SK-N-SH (cell line): ENCODE measurements at regions of chr3 and their contacts with region 1.

Region 1: DNA sequence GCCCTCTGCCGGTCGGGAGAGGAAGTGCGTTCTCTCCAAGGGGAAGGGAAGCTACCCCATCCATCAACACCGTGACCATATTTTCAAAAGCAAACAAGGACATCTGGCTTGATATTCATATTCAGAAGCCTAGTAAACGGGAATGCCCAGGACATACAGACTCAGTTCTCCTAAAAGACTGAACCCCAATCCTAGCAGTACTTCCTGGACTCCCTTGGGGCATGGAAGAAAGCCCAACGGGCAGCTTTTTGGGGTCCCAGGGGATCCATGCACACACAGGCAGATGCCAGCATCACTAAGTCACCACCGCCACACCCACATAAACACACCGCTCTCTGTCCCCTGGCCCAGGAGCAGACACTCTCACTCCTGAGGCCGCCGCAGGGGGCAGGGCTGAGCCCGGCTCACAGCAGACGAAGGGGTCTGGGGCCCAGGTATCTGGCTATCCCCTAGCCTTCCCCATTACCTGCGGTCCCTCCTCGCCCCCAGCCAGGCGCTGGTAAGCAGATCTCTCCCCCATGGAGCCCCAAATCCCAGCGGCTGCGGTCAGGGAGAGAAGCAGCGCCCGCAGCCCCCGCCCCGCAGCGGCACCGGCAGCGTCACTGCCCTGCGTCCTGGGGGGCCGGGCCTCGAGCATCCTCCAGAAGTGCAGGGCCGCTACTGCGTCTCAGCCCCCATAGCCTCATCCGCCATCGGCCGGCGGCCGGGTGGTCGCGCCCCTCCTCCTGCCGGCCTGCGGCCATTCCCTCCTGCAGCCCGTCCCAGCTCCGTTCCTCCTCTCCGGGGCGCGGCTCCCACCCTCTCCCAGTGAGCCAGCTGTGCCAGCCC is 13.4 kb downstream of the TNK2 start:
- DNase-seq: peak; percentile 84
- H3K4me3 ChIP-seq: peak overlapping the region; percentile 80 to 99
- H3K27ac ChIP-seq: peak overlapping the region; percentile 81 to 92
- H3K4me1 ChIP-seq: peaks cover 41 to 59% of the 10 kb centered on the region in 2 experiments; a peak in 3 of 4 replicates
- H3K27me3 ChIP-seq: no peaks in the 10 kb centered on the region
- CTCF ChIP-seq: peak; percentile 95
- EP300 ChIP-seq: no peak; a peak in 1 of 4 replicates
- RAD21 ChIP-seq: peak; percentile 88

Region 2: DNA sequence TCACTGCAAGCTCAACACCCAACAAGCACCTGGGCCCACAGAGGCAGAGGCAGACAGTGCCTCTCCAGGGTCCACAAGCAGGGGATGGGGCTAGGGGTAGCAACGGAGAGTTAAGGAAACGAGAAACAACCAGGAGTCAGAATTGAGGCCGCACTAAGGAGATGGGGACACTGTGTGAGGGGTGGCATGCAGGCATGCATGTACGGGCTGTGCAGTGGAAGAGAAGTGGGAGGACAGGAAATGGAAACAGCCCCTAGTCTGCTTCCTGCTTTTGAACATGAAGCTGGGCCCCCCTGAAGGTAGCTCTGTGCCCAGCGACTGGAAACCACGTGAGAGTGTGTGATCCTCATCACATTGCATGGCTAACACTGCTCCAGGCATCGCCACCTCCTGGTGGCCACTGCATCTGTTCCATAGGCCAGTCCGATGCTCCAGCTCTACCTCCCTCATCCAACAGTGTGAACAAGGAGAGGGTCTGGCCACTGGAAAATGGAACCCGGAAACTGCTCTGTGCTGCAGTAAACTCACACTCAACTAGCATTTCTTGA is 668.0 kb before region 1 on chr3:
- CTCF ChIA-PET with region 1: no interaction called
- POLR2A ChIA-PET with region 1: no interaction called
- DNase-seq: no peak
- H3K4me3 ChIP-seq: no peak overlapping the region
- H3K27ac ChIP-seq: no peak overlapping the region
- H3K4me1 ChIP-seq: peaks cover 2 to 8% of the 10 kb centered on the region in 2 experiments; a peak in 3 of 4 replicates
- H3K27me3 ChIP-seq: no peaks in the 10 kb centered on the region
- CTCF ChIP-seq: peak; percentile 38
- EP300 ChIP-seq: no peak
- RAD21 ChIP-seq: peak; percentile 48

Region 3: GRCh38 chr3:195870442-195870841 is 24.6 kb before region 1 on chr3:
- CTCF ChIA-PET with region 1: interaction called, 52 read pairs
- POLR2A ChIA-PET with region 1: no interaction called
- DNase-seq: no peak
- H3K4me3 ChIP-seq: no peak overlapping the region
- H3K27ac ChIP-seq: no peak overlapping the region
- H3K4me1 ChIP-seq: no peaks in the 10 kb centered on the region
- H3K27me3 ChIP-seq: no peaks in the 10 kb centered on the region
- CTCF ChIP-seq: no peak
- EP300 ChIP-seq: no peak
- RAD21 ChIP-seq: no peak

Region 4: GRCh38 chr3:195876297-195877031 is 18.5 kb before region 1 on chr3:
- CTCF ChIA-PET with region 1: interaction called, 52 read pairs
- POLR2A ChIA-PET with region 1: no interaction called
- DNase-seq: no peak
- H3K4me3 ChIP-seq: no peak overlapping the region
- H3K27ac ChIP-seq: no peak overlapping the region
- H3K4me1 ChIP-seq: no peaks in the 10 kb centered on the region
- H3K27me3 ChIP-seq: no peaks in the 10 kb centered on the region
- CTCF ChIP-seq: no peak
- EP300 ChIP-seq: no peak
- RAD21 ChIP-seq: no peak

Region 5: DNA sequence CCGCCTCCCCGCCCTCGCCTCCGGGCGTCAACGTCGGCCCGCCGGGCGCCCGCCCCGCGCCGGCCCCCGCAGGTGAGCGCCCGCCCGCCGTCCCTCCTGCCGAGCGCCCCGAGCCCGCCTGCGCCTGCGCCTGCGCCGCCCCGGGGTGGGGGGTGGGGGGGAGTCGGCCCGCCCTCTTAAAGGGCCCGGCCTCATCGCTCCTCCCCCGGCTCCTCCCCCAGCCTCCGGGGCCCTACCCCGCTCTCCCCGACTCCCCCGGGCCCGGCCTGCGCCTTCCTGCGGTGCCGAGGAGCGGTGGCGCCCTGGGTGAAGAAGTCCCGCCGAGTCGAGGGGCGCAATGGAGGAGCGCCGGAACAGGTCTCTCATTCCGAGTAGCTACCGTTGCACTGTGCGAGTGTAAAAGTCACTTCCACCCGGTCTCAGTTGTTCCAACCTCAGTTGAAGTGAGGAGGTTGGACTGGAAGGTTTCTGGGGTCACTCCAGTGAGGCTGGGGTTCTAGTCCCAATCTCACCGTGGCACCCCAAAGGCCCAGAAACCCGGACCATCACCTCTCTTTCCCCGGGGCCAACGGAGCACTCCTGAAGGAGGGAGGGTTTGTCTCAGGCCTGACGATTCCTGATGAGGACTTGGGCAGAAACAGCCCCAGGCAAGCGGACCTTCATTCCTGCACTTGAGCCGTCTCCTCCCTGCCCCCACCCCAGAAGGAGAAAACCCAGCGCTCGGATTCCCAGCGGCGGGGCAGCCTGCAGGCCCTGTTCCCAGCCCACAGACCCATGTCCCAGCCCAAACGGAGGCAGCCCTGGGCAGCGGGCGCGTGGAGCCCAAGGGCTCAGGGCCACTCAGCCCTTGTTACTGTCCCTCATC is 14.9 kb after region 1 on chr3:
- CTCF ChIA-PET with region 1: interaction called, 141 read pairs
- POLR2A ChIA-PET with region 1: interaction called, 8 read pairs
- DNase-seq: peak; percentile 99
- H3K4me3 ChIP-seq: peak overlapping the region in 1 of 2 experiments; percentile 72; a peak in 3 of 4 replicates
- H3K27ac ChIP-seq: peak overlapping the region in 1 of 2 experiments; percentile 58; a peak in 1 of 4 replicates
- H3K4me1 ChIP-seq: peaks cover 14 to 32% of the 10 kb centered on the region in 2 experiments; a peak in 2 of 4 replicates
- H3K27me3 ChIP-seq: no peaks in the 10 kb centered on the region
- CTCF ChIP-seq: no peak
- EP300 ChIP-seq: no peak
- RAD21 ChIP-seq: no peak